ENCODE measurements at regions of chr6 and their contacts with region 1.

Region 1: GRCh38 chr6:43070028-43070632 is 6.0 kb upstream of the PTK7 start:
- DNase-seq: peak in 2 of 5 donors; percentile 36 to 43
- H3K4me3 ChIP-seq: no peak overlapping the region
- H3K27ac ChIP-seq: no peak overlapping the region
- H3K4me1 ChIP-seq: peaks cover 3% of the 10 kb centered on the region
- H3K27me3 ChIP-seq: no peaks in the 10 kb centered on the region
- CTCF ChIP-seq: peak; percentile 22 to 62 (median 52)
- EP300 ChIP-seq: no peak
- POLR2A ChIP-seq: no peak

Region 2: GRCh38 chr6:42652024-42652746 is 417.9 kb before region 1 on chr6:
- intact Hi-C with region 1: no loop called
- DNase-seq: no peak
- H3K4me3 ChIP-seq: no peak overlapping the region
- H3K27ac ChIP-seq: no peak overlapping the region
- H3K4me1 ChIP-seq: no peaks in the 10 kb centered on the region
- H3K27me3 ChIP-seq: no peaks in the 10 kb centered on the region
- CTCF ChIP-seq: no peak
- EP300 ChIP-seq: no peak
- POLR2A ChIP-seq: no peak

Region 3: DNA sequence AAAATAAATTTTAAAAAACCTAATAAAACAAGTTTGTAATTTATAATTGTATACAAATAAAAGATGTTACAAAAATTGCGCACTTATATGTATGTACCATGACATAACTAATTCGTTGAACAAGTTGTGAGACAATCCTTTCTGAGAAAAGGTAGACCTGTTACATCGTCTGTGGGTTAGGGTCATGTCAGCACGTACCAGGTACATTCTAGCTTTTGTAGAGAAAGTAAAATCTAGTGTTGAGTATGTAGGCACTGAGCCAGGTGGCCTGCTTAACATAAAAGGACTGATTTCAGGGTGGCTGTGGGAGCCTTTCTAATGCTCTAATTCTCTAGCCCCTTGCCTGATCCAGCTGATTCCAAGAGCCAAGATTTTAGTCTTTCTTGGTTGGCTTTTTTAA is 180.3 kb before region 1 on chr6:
- intact Hi-C with region 1: no loop called
- DNase-seq: no peak
- H3K4me3 ChIP-seq: peak overlapping the region; percentile 79
- H3K27ac ChIP-seq: no peak overlapping the region
- H3K4me1 ChIP-seq: no peaks in the 10 kb centered on the region
- H3K27me3 ChIP-seq: no peaks in the 10 kb centered on the region
- CTCF ChIP-seq: no peak
- EP300 ChIP-seq: no peak
- POLR2A ChIP-seq: no peak

Region 4: GRCh38 chr6:43129434-43130194 is 59.5 kb after region 1 on chr6:
- intact Hi-C with region 1: loop called in 3 of 4 experiments (anchors 5 to 10 kb)
- DNase-seq: no peak
- H3K4me3 ChIP-seq: no peak overlapping the region
- H3K27ac ChIP-seq: no peak overlapping the region
- H3K4me1 ChIP-seq: peaks cover 14% of the 10 kb centered on the region
- H3K27me3 ChIP-seq: no peaks in the 10 kb centered on the region
- CTCF ChIP-seq: no peak
- EP300 ChIP-seq: no peak
- POLR2A ChIP-seq: no peak